ENCODE measurements at regions of chr13 and their contacts with region 1.

Region 1: DNA sequence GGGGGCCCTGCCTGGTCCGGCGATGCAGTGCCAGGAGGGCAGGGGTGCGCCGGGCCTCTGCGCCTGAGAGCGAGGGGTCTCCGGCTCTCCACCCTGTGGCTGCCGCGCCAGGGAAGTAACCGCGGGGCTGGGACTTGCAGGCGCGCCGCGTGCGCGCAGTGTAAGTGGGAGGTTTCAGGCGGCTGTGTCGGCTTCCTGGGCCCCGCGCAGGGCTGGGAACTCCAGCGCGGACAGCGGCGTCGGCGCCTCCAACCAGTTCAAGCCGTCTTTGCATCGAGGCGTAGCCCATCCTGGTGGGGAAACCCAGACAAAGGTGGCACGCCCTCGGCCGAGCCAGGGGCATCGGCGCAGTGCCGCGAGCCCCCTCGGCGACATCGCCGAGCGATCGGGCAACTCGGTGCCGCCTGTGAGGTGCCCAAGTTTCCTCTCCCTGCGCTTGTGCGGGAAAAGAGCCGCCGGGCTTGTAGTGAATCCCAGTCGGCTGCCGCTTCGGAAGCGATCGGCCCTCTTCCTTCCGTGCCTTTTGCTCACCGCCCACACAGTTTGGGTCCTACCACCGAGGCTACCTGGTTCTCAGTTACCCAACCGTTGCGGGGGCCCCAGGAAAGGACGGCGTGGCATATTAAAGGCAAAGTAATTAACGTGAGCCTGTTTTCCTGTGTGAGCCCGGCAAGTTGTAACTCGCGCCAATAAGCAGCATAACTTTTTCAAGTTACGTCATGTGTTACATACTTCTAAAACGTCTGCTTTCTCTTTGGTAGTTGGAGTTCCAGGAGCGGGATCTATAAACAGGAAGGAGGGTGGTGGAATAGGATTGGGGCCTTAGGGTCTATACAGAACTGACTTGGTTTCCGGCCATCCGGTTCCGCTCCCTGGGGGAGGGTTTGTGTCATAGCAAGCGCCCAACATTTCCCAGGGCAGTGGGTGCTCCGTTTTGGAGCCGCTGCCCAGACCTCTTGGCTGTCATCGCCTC is 1.2 kb downstream of the LRCH1 start:
- DNase-seq: peak; percentile 76 to 89 (median 86)
- ATAC-seq: peak; percentile 83
- H3K4me3 ChIP-seq: peak overlapping the region; percentile 79
- H3K27ac ChIP-seq: peak overlapping the region; percentile 87
- H3K4me1 ChIP-seq: peaks cover 10% of the 10 kb centered on the region
- H3K27me3 ChIP-seq: no peaks in the 10 kb centered on the region

Region 2: GRCh38 chr13:46100191-46100815 is 453.9 kb before region 1 on chr13:
- intact Hi-C with region 1: no loop called
- DNase-seq: no peak
- ATAC-seq: no peak
- H3K4me3 ChIP-seq: no peak overlapping the region
- H3K27ac ChIP-seq: no peak overlapping the region
- H3K4me1 ChIP-seq: no peaks in the 10 kb centered on the region
- H3K27me3 ChIP-seq: no peaks in the 10 kb centered on the region

Region 3: DNA sequence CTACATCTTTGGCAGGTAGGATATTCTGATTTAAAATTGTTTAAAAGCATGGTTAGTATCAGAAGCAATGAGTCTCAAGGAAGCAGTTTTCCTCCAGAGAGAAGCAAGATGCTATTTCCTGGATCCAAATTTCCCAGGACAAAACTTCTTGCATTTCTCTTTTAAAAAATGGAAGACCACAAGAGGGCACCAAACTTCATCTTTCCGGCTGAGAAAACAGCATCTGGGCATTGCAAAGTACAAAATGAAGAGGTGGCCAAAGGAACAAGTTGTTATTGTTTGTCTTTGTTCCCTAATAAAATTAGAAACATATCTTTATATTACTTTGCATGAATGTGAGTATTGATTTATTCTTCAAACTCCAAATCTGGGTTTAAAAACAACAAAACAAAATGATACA is 61.2 kb before region 1 on chr13:
- intact Hi-C with region 1: loop called in 2 of 4 experiments (anchors 5 kb)
- DNase-seq: no peak
- ATAC-seq: peak in 1 of 2 donors; percentile 34
- H3K4me3 ChIP-seq: no peak overlapping the region
- H3K27ac ChIP-seq: no peak overlapping the region
- H3K4me1 ChIP-seq: no peaks in the 10 kb centered on the region
- H3K27me3 ChIP-seq: no peaks in the 10 kb centered on the region

Region 4: DNA sequence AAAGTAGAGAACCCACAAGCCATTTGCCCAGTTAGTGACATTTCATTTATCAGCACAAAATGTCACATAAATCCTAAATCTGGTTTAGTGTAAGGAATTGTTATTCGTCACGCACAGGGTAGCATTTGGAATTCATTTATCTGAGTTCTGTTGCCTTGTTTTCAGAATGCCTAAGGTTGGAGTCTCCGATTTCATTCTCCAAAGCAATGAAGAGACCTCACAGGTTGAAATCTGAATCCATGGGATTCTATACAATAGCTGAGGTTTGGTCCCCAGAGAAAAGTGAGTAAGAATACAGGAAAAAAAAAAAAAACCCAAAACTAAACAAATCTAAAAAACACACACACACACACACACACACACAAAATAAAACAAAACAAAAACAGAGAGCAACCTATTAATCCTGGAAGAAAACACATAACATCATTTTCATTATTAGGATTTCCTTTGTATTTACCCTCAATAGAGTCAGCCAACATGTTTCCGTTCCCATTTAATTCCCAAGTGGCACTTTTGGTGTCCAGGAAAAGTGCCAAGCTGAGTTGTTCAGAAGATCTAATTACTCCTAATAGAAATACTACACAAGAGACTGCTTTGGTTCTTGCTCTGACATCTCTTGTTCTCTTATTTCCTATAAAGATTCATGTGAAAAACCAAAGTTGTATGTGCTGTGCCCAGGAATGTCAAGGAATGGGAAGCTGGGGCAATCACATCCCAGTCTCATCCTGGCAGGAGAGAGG is 37.4 kb before region 1 on chr13:
- intact Hi-C with region 1: no loop called
- DNase-seq: no peak
- ATAC-seq: peak in 1 of 2 donors; percentile 48
- H3K4me3 ChIP-seq: no peak overlapping the region
- H3K27ac ChIP-seq: no peak overlapping the region
- H3K4me1 ChIP-seq: peaks cover 5% of the 10 kb centered on the region
- H3K27me3 ChIP-seq: no peaks in the 10 kb centered on the region

Region 5: GRCh38 chr13:46698910-46699460 is 144.8 kb after region 1 on chr13:
- intact Hi-C with region 1: loop called in 1 of 4 experiments (anchors 5 kb)
- DNase-seq: no peak
- ATAC-seq: peak; percentile 48 to 62
- H3K4me3 ChIP-seq: no peak overlapping the region
- H3K27ac ChIP-seq: no peak overlapping the region
- H3K4me1 ChIP-seq: peaks cover 8% of the 10 kb centered on the region
- H3K27me3 ChIP-seq: no peaks in the 10 kb centered on the region

Region 6: GRCh38 chr13:46721054-46721453 is 166.9 kb after region 1 on chr13:
- intact Hi-C with region 1: loop called (anchors 2 to 10 kb)
- DNase-seq: peak in 2 of 3 donors; percentile 32 to 69
- ATAC-seq: peak; percentile 64 to 67
- H3K4me3 ChIP-seq: no peak overlapping the region
- H3K27ac ChIP-seq: no peak overlapping the region
- H3K4me1 ChIP-seq: no peaks in the 10 kb centered on the region
- H3K27me3 ChIP-seq: no peaks in the 10 kb centered on the region